Dorsolateral prefrontal cortex (tissue), 120 donors: ENCODE measurements at regions of chr17 and their contacts with region 1.

Region 1: GRCh38 chr17:700504-701094 is 14.0 kb downstream of the VPS53 start:
- DNase-seq: no peak
- H3K4me3 ChIP-seq: no peak overlapping the region
- H3K27ac ChIP-seq: peak overlapping the region in 2 of 59 donors; percentile 7 to 23
- H3K27me3 ChIP-seq: no peaks in the 10 kb centered on the region
- CTCF ChIP-seq: peak; percentile 63 to 95 (median 80)

Region 2: DNA sequence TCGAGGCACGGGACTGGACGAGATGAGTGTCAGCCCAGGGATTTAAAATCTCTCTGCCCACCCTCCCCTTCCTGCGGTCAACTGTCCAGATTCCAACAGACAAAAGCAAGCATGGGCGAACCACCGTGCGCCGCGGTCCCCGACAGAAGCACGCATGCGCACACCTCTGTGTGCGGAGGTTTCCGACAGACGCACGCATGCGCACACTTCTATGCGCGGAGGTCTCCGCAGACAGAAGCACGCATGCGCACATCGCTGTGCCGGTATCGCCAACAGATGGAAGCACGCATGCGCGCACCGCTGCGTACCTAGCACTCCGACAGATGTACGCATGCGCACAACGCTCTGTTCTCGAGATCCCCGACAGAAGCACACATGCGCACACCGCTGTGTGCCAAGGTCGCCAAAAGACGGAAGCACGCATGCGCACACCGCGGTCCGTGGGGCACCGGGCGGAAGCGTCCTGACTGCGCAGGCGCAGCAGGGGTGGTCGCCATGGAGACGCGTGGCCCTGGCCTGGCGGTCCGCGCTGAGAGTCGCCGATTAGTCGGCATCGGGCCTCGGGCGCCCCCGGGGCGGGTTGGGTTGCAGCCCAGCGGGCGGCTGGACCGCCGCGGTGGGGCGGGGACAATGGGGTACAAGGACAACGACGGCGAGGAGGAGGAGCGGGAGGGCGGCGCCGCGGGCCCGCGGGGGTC is 290.6 kb before region 1 on chr17:
- intact Hi-C with region 1: loop called (anchors 2 to 5 kb)
- DNase-seq: peak; percentile 93 to 97 (median 95)
- H3K4me3 ChIP-seq: peak overlapping the region; percentile 55 to 98 (median 87)
- H3K27ac ChIP-seq: peak overlapping the region; percentile 18 to 96 (median 81)
- H3K27me3 ChIP-seq: no peaks in the 10 kb centered on the region
- CTCF ChIP-seq: peak in 29 of 56 donors; percentile 5 to 58 (median 25)

Region 3: GRCh38 chr17:732067-732901 is 31.7 kb after region 1 on chr17 and contains the start of gene TLCD3A:
- intact Hi-C with region 1: no loop called
- DNase-seq: peak in 6 of 10 donors; percentile 36 to 75 (median 67)
- H3K4me3 ChIP-seq: peak within 1 kb of the TSS; percentile 51 to 91 (median 80)
- H3K27ac ChIP-seq: peak within 1 kb of the TSS in 53 of 59 donors; percentile 29 to 91 (median 77)
- H3K27me3 ChIP-seq: no peaks in the 10 kb centered on the region
- CTCF ChIP-seq: no peak
- total RNA-seq, gene TLCD3A: 4.2 to 19.9 (median 7.4) TPM